ENCODE measurements at regions of chr1 and their contacts with region 1.

Region 1: GRCh38 chr1:64107118-64107519 is 96.3 kb upstream of the UBE2U start:
- DNase-seq: no peak
- H3K4me3 ChIP-seq: no peak overlapping the region
- H3K27ac ChIP-seq: no peak overlapping the region
- H3K4me1 ChIP-seq: no peaks in the 10 kb centered on the region
- H3K27me3 ChIP-seq: no peaks in the 10 kb centered on the region
- CTCF ChIP-seq: no peak
- EP300 ChIP-seq: no peak
- POLR2A ChIP-seq: no peak

Region 2: DNA sequence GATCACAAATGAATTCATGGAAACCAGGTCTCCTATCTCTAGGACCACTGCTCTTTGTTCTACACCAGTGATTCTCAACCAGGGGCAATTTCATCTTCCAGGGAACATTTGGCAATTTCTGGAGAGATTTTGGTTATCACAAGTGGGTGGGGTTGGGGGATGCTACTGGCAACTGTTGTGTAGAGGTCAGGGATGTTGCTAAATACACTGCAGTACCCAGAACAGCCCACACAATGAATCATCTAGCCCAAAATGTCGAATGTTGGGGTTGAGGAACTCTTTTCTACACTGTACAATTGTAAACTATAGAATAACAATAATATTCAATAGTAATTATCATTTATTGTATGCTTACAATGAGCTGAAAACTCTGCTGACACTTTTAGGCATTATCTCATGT is 40.6 kb after region 1 on chr1:
- in situ Hi-C with region 1: no loop called
- intact Hi-C with region 1: no loop called
- DNase-seq: no peak
- H3K4me3 ChIP-seq: no peak overlapping the region
- H3K27ac ChIP-seq: no peak overlapping the region
- H3K4me1 ChIP-seq: no peaks in the 10 kb centered on the region
- H3K27me3 ChIP-seq: no peaks in the 10 kb centered on the region
- CTCF ChIP-seq: no peak
- EP300 ChIP-seq: no peak
- POLR2A ChIP-seq: no peak

Region 3: GRCh38 chr1:64171797-64172281 is 64.7 kb after region 1 on chr1:
- in situ Hi-C with region 1: no loop called
- intact Hi-C with region 1: loop called (anchors 2 kb)
- DNase-seq: no peak
- H3K4me3 ChIP-seq: no peak overlapping the region
- H3K27ac ChIP-seq: peak overlapping the region in 2 of 4 donors; percentile 8 to 14
- H3K4me1 ChIP-seq: peaks cover 0 to 22% (median 13%) of the 10 kb centered on the region in 4 donors
- H3K27me3 ChIP-seq: no peaks in the 10 kb centered on the region
- CTCF ChIP-seq: no peak
- EP300 ChIP-seq: no peak
- POLR2A ChIP-seq: no peak

Region 4: DNA sequence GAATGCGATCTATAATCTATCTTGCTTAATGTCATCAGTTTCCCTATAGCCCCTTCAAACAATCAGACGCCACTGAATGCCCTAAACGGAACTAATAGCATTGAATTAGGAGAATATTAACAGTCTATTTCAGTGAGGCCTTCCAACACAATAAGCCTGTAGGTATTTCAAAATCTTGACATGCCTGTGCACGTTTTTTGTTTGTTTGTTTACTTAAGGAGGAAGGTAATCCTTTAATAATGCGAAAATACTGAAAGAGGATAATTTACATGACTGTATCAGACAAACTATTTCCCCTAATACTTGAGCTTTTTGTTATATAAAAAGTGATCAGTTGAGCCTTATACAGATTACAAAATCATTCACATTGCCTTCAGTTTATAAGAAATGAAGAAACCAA is 888.2 kb after region 1 on chr1:
- in situ Hi-C with region 1: no loop called
- intact Hi-C with region 1: no loop called
- DNase-seq: no peak
- H3K4me3 ChIP-seq: no peak overlapping the region
- H3K27ac ChIP-seq: no peak overlapping the region
- H3K4me1 ChIP-seq: no peaks in the 10 kb centered on the region
- H3K27me3 ChIP-seq: no peaks in the 10 kb centered on the region
- CTCF ChIP-seq: no peak
- EP300 ChIP-seq: no peak
- POLR2A ChIP-seq: no peak

Measured in transverse colon (tissue), 4 donors.